Caco-2 (cell line): ENCODE measurements at regions of chr1 and their contacts with region 1.

Region 1: DNA sequence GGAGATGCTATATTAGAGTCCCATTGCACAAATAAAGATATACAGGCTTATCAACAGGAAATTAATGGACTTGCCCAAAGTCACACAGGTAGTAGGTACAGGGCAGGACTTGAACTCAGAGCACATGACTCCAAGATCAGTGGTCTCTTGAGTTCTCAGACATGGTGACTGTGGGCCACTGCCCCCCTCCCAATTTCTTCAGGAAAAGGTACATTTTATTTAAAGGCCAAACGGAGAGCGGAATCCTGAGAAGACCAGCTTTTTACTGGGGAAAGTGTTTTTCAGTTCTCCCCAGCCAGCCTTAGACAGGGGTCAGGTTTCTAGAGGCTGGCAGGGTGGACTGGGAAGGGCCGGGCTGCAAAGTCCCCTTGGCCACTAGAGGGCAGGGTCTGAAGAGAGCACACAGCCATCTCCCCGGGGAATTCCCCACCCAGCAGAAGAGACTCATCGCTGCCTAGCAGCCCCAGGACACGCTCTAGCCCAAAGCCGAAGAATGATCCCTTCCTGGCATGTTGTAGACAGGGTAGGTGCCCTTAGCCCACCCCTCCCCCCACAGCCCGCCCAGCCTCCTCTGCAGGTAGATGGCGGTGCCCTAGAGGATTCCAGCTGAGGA is 29.7 kb downstream of the ACP6 start:
- DNase-seq: peak; percentile 72 to 81
- H3K4me3 ChIP-seq: no peak overlapping the region
- H3K4me3 Mint-ChIP-seq: no peak overlapping the region
- H3K27ac Mint-ChIP-seq: no peak overlapping the region
- H3K4me1 ChIP-seq: peaks cover 18% of the 10 kb centered on the region
- H3K4me1 Mint-ChIP-seq: peaks cover 11% of the 10 kb centered on the region
- H3K27me3 ChIP-seq: no peaks in the 10 kb centered on the region
- H3K27me3 Mint-ChIP-seq: no peaks in the 10 kb centered on the region
- CTCF ChIP-seq: peak; percentile 83 to 91

Region 2: GRCh38 chr1:147500309-147501011 is 140.2 kb before region 1 on chr1:
- CTCF ChIA-PET with region 1: no interaction called
- POLR2A ChIA-PET with region 1: no interaction called
- intact Hi-C with region 1: loop called (anchors 2 kb)
- DNase-seq: no peak
- H3K4me3 ChIP-seq: no peak overlapping the region
- H3K4me3 Mint-ChIP-seq: no peak overlapping the region
- H3K27ac Mint-ChIP-seq: no peak overlapping the region
- H3K4me1 ChIP-seq: peaks cover 5% of the 10 kb centered on the region
- H3K4me1 Mint-ChIP-seq: peaks cover 10% of the 10 kb centered on the region
- H3K27me3 ChIP-seq: no peaks in the 10 kb centered on the region
- H3K27me3 Mint-ChIP-seq: no peaks in the 10 kb centered on the region
- CTCF ChIP-seq: no peak